K562 (cell line): ENCODE measurements at regions of chr14 and their contacts with region 1.

Region 1: GRCh38 chr14:100383727-100384158 is 60.6 kb downstream of the SLC25A47 start:
- DNase-seq: peak; percentile 55 to 72 (median 60)
- ATAC-seq: peak; percentile 91
- H3K4me3 ChIP-seq: no peak overlapping the region
- H3K27ac ChIP-seq: no peak overlapping the region
- H3K4me1 ChIP-seq: peaks cover 7 to 16% of the 10 kb centered on the region in 2 experiments; a peak in 3 of 5 replicates
- H3K27me3 ChIP-seq: no peaks in the 10 kb centered on the region
- CTCF ChIP-seq: peak; percentile 76 to 80 (median 79)
- EP300 ChIP-seq: no peak
- POLR2A ChIP-seq: no peak
- RAD21 ChIP-seq: peak; percentile 40 to 67

Region 2: GRCh38 chr14:99467338-99468078 is 916.2 kb before region 1 on chr14:
- CTCF ChIA-PET with region 1: no interaction called
- POLR2A ChIA-PET with region 1: no interaction called
- in situ Hi-C with region 1: no loop called
- intact Hi-C with region 1: no loop called
- DNase-seq: no peak
- ATAC-seq: no peak; the same call in 2 of the 3 replicates
- H3K4me3 ChIP-seq: no peak overlapping the region
- H3K27ac ChIP-seq: no peak overlapping the region
- H3K4me1 ChIP-seq: peaks cover 0 to 2% of the 10 kb centered on the region in 2 experiments; a peak in 2 of 5 replicates
- H3K27me3 ChIP-seq: no peaks in the 10 kb centered on the region
- CTCF ChIP-seq: no peak
- EP300 ChIP-seq: no peak
- POLR2A ChIP-seq: no peak
- RAD21 ChIP-seq: no peak

Region 3: DNA sequence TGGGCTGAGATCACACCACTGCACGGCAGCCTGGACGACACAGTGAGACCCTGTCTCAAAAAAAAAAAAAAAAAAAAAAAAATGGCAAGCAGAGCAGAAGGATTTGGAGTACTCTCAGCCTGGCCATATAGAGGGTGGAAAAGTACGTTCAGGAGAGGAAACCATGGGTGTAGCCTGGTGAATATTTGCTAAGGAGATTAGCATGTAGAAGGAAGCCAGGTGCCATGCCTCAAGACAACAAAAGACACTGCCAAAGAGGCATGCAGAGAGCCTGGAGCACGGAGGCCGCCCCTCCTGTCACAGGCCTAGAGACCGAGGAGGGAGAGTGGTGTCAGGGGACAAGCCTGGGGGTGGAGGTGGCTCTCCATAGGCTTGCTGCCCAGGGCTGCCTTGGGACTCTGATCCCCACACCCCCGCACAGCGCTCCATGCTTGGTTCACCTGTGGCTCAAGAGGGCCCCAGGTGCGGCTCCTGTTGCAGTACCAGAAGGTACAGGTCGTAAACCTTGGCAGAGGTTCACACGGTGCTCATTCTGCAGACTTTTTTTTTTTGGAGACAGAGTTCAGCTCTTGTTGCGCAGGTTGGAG is 196.4 kb before region 1 on chr14:
- CTCF ChIA-PET with region 1: no interaction called
- POLR2A ChIA-PET with region 1: no interaction called
- in situ Hi-C with region 1: no loop called
- intact Hi-C with region 1: no loop called
- DNase-seq: no peak
- ATAC-seq: no peak; the same call in 2 of the 3 replicates
- H3K4me3 ChIP-seq: no peak overlapping the region
- H3K27ac ChIP-seq: no peak overlapping the region
- H3K4me1 ChIP-seq: peaks cover 4 to 7% of the 10 kb centered on the region in 2 experiments; a peak in 3 of 5 replicates
- H3K27me3 ChIP-seq: no peaks in the 10 kb centered on the region
- CTCF ChIP-seq: no peak
- EP300 ChIP-seq: no peak
- POLR2A ChIP-seq: no peak
- RAD21 ChIP-seq: no peak

Region 4: GRCh38 chr14:100238419-100239189 is 145.1 kb before region 1 on chr14 and contains the start of gene YY1:
- CTCF ChIA-PET with region 1: no interaction called
- POLR2A ChIA-PET with region 1: no interaction called
- in situ Hi-C with region 1: no loop called
- intact Hi-C with region 1: no loop called
- DNase-seq: peak; percentile 86 to 96 (median 91)
- ATAC-seq: peak; percentile 91
- H3K4me3 ChIP-seq: peak within 1 kb of the TSS; percentile 96
- H3K27ac ChIP-seq: peak within 1 kb of the TSS; percentile 98
- H3K4me1 ChIP-seq: peaks cover 13 to 15% of the 10 kb centered on the region in 2 experiments; a peak in 4 of 5 replicates
- H3K27me3 ChIP-seq: no peaks in the 10 kb centered on the region
- CTCF ChIP-seq: no peak
- EP300 ChIP-seq: no peak
- POLR2A ChIP-seq: peak; percentile 53
- RAD21 ChIP-seq: no peak
- polyA plus RNA-seq, gene YY1: 20.8 to 21.0 TPM

Region 5: GRCh38 chr14:100424504-100425418 is 41.0 kb after region 1 on chr14:
- CTCF ChIA-PET with region 1: no interaction called
- POLR2A ChIA-PET with region 1: interaction called, 3 read pairs
- in situ Hi-C with region 1: no loop called
- intact Hi-C with region 1: loop called (anchors 5 kb)
- DNase-seq: no peak
- ATAC-seq: no peak; the same call in 2 of the 3 replicates
- H3K4me3 ChIP-seq: no peak overlapping the region
- H3K27ac ChIP-seq: no peak overlapping the region
- H3K4me1 ChIP-seq: peaks cover 22 to 33% of the 10 kb centered on the region in 2 experiments
- H3K27me3 ChIP-seq: no peaks in the 10 kb centered on the region
- CTCF ChIP-seq: no peak
- EP300 ChIP-seq: no peak
- POLR2A ChIP-seq: no peak
- RAD21 ChIP-seq: no peak

Region 6: GRCh38 chr14:100440187-100440631 is 56.5 kb after region 1 on chr14:
- CTCF ChIA-PET with region 1: no interaction called
- POLR2A ChIA-PET with region 1: interaction called, 4 read pairs
- in situ Hi-C with region 1: no loop called
- intact Hi-C with region 1: loop called (anchors 10 kb)
- DNase-seq: peak; percentile 62 to 79 (median 69)
- ATAC-seq: peak; percentile 94
- H3K4me3 ChIP-seq: no peak overlapping the region
- H3K27ac ChIP-seq: peak overlapping the region; percentile 65; the same call in 2 of the 3 replicates
- H3K4me1 ChIP-seq: peaks cover 29 to 40% of the 10 kb centered on the region in 2 experiments
- H3K27me3 ChIP-seq: no peaks in the 10 kb centered on the region
- CTCF ChIP-seq: peak; percentile 82 to 84 (median 83)
- EP300 ChIP-seq: no peak
- POLR2A ChIP-seq: no peak
- RAD21 ChIP-seq: peak; percentile 81 to 86

Region 7: DNA sequence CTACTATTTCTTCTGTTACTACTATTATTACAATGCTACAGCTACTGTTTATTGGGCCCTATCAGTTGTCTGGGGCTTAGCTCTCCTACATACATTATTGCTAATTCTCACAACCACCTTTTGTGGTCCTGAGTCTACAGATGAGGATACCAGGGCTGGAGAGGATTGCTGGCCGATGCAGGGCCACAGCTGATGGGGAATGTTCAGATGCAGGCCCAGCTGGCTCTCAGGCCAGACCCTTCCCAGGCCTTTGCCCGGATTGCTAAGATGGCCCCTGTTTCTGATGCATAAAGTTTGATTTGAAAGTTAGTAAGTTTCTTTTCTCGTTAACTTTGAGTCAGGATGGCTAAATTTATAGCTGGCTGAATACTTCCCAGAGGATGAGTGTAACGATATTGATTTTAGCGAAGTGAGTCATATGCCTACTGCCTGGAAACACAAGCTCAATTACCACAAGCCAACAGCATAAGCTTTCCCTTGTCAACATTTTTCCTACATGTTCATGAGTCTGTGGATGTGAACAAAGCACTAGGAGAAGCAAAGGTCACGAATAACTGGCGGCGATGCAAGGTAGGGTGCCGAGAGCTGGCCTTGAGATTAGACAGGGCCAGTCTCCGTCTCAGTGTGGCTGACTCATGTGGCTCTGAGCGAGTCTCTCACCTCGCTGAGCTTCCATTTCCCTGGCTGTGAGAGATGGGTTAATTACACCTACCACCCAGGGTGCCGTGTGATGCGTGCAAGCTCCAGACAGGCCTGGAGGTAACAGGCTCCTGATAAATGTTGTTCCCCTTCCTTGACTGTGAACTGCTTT is 92.5 kb after region 1 on chr14:
- CTCF ChIA-PET with region 1: no interaction called
- POLR2A ChIA-PET with region 1: no interaction called
- in situ Hi-C with region 1: no loop called
- intact Hi-C with region 1: no loop called
- DNase-seq: peak in 2 of 4 experiments; percentile 7 to 10
- ATAC-seq: no peak
- H3K4me3 ChIP-seq: no peak overlapping the region
- H3K27ac ChIP-seq: no peak overlapping the region
- H3K4me1 ChIP-seq: no peaks in the 10 kb centered on the region; a peak in 2 of 5 replicates
- H3K27me3 ChIP-seq: no peaks in the 10 kb centered on the region
- CTCF ChIP-seq: no peak
- EP300 ChIP-seq: no peak
- POLR2A ChIP-seq: no peak
- RAD21 ChIP-seq: no peak

Region 8: GRCh38 chr14:100524933-100525243 is 141.1 kb after region 1 on chr14:
- CTCF ChIA-PET with region 1: no interaction called
- POLR2A ChIA-PET with region 1: no interaction called
- in situ Hi-C with region 1: no loop called
- intact Hi-C with region 1: loop called (anchors 2 kb)
- DNase-seq: peak; percentile 66 to 74 (median 70)
- ATAC-seq: peak; percentile 93
- H3K4me3 ChIP-seq: no peak overlapping the region
- H3K27ac ChIP-seq: no peak overlapping the region
- H3K4me1 ChIP-seq: no peaks in the 10 kb centered on the region; a peak in 1 of 5 replicates
- H3K27me3 ChIP-seq: no peaks in the 10 kb centered on the region
- CTCF ChIP-seq: peak; percentile 74 to 78 (median 74)
- EP300 ChIP-seq: no peak
- POLR2A ChIP-seq: no peak
- RAD21 ChIP-seq: peak; percentile 65 to 85

Region 9: GRCh38 chr14:100654814-100655740 is 271.3 kb after region 1 on chr14:
- CTCF ChIA-PET with region 1: interaction called, 28 read pairs
- POLR2A ChIA-PET with region 1: interaction called, 4 read pairs
- in situ Hi-C with region 1: no loop called
- intact Hi-C with region 1: no loop called
- DNase-seq: peak; percentile 55 to 76 (median 70)
- ATAC-seq: peak; percentile 93
- H3K4me3 ChIP-seq: no peak overlapping the region; the same call in 1 of the 2 replicates
- H3K27ac ChIP-seq: no peak overlapping the region
- H3K4me1 ChIP-seq: peaks cover 3 to 40% of the 10 kb centered on the region in 2 experiments; a peak in 3 of 5 replicates
- H3K27me3 ChIP-seq: no peaks in the 10 kb centered on the region; a peak in 1 of 5 replicates
- CTCF ChIP-seq: peak; percentile 57 to 81 (median 68)
- EP300 ChIP-seq: no peak
- POLR2A ChIP-seq: no peak
- RAD21 ChIP-seq: peak; percentile 49 to 70